Activated T-helper 1 cell treated with anti-CD3 and anti-CD28 coated beads, Interleukin-12 subunit alpha, Interleukin-12 subunit beta, Interleukin-2, Interleukin-4 antibody, amounts not matched to agents 30 ng/mL and 10 ng/mL and 1 ng/mL, durations not matched to agents 14 hours and 24 hours and 36 hours (primary cell): ENCODE measurements at regions of chr17 and their contacts with region 1.

Region 1: GRCh38 chr17:48505787-48506645 is 24.8 kb downstream of the HOXB1 start:
- DNase-seq: peak; percentile 70
- H3K4me3 Mint-ChIP-seq: peak overlapping the region; percentile 60
- H3K27ac Mint-ChIP-seq: peak overlapping the region; percentile 84
- H3K4me1 Mint-ChIP-seq: peaks cover 49% of the 10 kb centered on the region
- H3K27me3 Mint-ChIP-seq: peaks cover 8% of the 10 kb centered on the region

Region 2: GRCh38 chr17:48483471-48484131 is 22.4 kb before region 1 on chr17:
- intact Hi-C with region 1: loop called (anchors 1 kb)
- DNase-seq: peak; percentile 40
- H3K4me3 Mint-ChIP-seq: peak overlapping the region; percentile 37
- H3K27ac Mint-ChIP-seq: peak overlapping the region; percentile 70
- H3K4me1 Mint-ChIP-seq: peaks cover 46% of the 10 kb centered on the region
- H3K27me3 Mint-ChIP-seq: no peaks in the 10 kb centered on the region